ENCODE measurements at regions of chr22 and their contacts with region 1.

Region 1: GRCh38 chr22:37643225-37643847 is 3.9 kb downstream of the SH3BP1 start:
- DNase-seq: no peak
- H3K4me3 ChIP-seq: no peak overlapping the region
- H3K27ac ChIP-seq: peak overlapping the region; percentile 57
- H3K4me1 ChIP-seq: peaks cover 48% of the 10 kb centered on the region
- H3K27me3 ChIP-seq: no peaks in the 10 kb centered on the region
- CTCF ChIP-seq: peak; percentile 69 to 87 (median 79)
- POLR2A ChIP-seq: no peak

Region 2: GRCh38 chr22:37544955-37545699 is 98.2 kb before region 1 on chr22:
- intact Hi-C with region 1: no loop called
- DNase-seq: no peak
- H3K4me3 ChIP-seq: peak overlapping the region; percentile 33 to 38
- H3K27ac ChIP-seq: peak overlapping the region; percentile 98
- H3K4me1 ChIP-seq: peaks cover 78% of the 10 kb centered on the region
- H3K27me3 ChIP-seq: no peaks in the 10 kb centered on the region
- CTCF ChIP-seq: peak; percentile 32 to 70 (median 41)
- POLR2A ChIP-seq: no peak

Region 3: GRCh38 chr22:37797874-37798500 is 154.7 kb after region 1 on chr22:
- intact Hi-C with region 1: loop called (anchors 10 kb)
- DNase-seq: no peak
- H3K4me3 ChIP-seq: no peak overlapping the region
- H3K27ac ChIP-seq: no peak overlapping the region
- H3K4me1 ChIP-seq: peaks cover 13% of the 10 kb centered on the region
- H3K27me3 ChIP-seq: no peaks in the 10 kb centered on the region
- CTCF ChIP-seq: no peak
- POLR2A ChIP-seq: no peak

Region 4: GRCh38 chr22:37933711-37934376 is 290.5 kb after region 1 on chr22:
- intact Hi-C with region 1: no loop called
- DNase-seq: no peak
- H3K4me3 ChIP-seq: no peak overlapping the region
- H3K27ac ChIP-seq: peak overlapping the region; percentile 80
- H3K4me1 ChIP-seq: peaks cover 41% of the 10 kb centered on the region
- H3K27me3 ChIP-seq: no peaks in the 10 kb centered on the region
- CTCF ChIP-seq: peak; percentile 86 to 98 (median 97)
- POLR2A ChIP-seq: no peak